Astrocyte of the cerebellum (primary cell): ENCODE measurements at regions of chr1 and their contacts with region 1.

Region 1: GRCh38 chr1:226603022-226603857 is 54.7 kb downstream of the STUM start:
- DNase-seq: no peak
- H3K4me3 ChIP-seq: no peak overlapping the region
- CTCF ChIP-seq: no peak

Region 2: GRCh38 chr1:226397011-226397926 is 206.0 kb before region 1 on chr1:
- in situ Hi-C with region 1: no loop called
- DNase-seq: no peak
- H3K4me3 ChIP-seq: no peak overlapping the region
- CTCF ChIP-seq: no peak

Region 3: GRCh38 chr1:226541631-226542622 is 61.3 kb before region 1 on chr1:
- in situ Hi-C with region 1: loop called (anchors 5 kb)
- DNase-seq: no peak
- H3K4me3 ChIP-seq: no peak overlapping the region
- CTCF ChIP-seq: no peak

Region 4: DNA sequence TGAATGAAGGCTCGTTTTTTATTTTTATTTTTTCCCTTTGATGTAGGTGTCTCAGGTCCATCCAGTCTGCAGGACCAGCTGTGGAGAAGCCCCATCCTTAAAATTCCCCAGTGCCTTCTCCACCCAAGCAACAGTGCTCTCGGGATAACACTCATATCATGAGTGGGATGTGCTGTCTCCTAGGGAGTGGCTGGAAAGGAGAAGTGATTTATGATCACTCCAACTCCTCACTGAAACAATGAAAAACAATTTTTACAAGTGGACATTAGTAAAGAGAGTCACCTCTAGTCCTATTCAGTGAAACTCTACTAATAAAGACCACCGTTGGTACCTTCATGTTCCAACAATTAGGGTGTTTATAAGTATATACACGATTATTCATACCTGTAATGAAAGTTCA is 51.2 kb before region 1 on chr1:
- in situ Hi-C with region 1: no loop called
- DNase-seq: no peak
- H3K4me3 ChIP-seq: no peak overlapping the region
- CTCF ChIP-seq: no peak